Activated T-helper 1 cell treated with anti-CD3 and anti-CD28 coated beads, Interleukin-12 subunit alpha, Interleukin-12 subunit beta, Interleukin-2, Interleukin-4 antibody, amounts not matched to agents 30 ng/mL and 10 ng/mL and 1 ng/mL, durations not matched to agents 14 hours and 24 hours and 36 hours (primary cell): ENCODE measurements at regions of chr6 and their contacts with region 1.

Region 1: GRCh38 chr6:71012866-71013469 is 56.1 kb upstream of the B3GAT2 start:
- DNase-seq: no peak
- H3K4me3 Mint-ChIP-seq: no peak overlapping the region
- H3K27ac Mint-ChIP-seq: no peak overlapping the region
- H3K4me1 Mint-ChIP-seq: no peaks in the 10 kb centered on the region
- H3K27me3 Mint-ChIP-seq: peaks cover 5% of the 10 kb centered on the region

Region 2: GRCh38 chr6:70221025-70221714 is 791.8 kb before region 1 on chr6:
- intact Hi-C with region 1: loop called (anchors 2 kb)
- DNase-seq: no peak
- H3K4me3 Mint-ChIP-seq: no peak overlapping the region
- H3K27ac Mint-ChIP-seq: no peak overlapping the region
- H3K4me1 Mint-ChIP-seq: no peaks in the 10 kb centered on the region
- H3K27me3 Mint-ChIP-seq: peaks cover 4% of the 10 kb centered on the region

Region 3: GRCh38 chr6:70310063-70310694 is 702.8 kb before region 1 on chr6:
- intact Hi-C with region 1: loop called (anchors 1 kb)
- DNase-seq: no peak
- H3K4me3 Mint-ChIP-seq: no peak overlapping the region
- H3K27ac Mint-ChIP-seq: no peak overlapping the region
- H3K4me1 Mint-ChIP-seq: peaks cover 6% of the 10 kb centered on the region
- H3K27me3 Mint-ChIP-seq: peaks cover 4% of the 10 kb centered on the region

Region 4: DNA sequence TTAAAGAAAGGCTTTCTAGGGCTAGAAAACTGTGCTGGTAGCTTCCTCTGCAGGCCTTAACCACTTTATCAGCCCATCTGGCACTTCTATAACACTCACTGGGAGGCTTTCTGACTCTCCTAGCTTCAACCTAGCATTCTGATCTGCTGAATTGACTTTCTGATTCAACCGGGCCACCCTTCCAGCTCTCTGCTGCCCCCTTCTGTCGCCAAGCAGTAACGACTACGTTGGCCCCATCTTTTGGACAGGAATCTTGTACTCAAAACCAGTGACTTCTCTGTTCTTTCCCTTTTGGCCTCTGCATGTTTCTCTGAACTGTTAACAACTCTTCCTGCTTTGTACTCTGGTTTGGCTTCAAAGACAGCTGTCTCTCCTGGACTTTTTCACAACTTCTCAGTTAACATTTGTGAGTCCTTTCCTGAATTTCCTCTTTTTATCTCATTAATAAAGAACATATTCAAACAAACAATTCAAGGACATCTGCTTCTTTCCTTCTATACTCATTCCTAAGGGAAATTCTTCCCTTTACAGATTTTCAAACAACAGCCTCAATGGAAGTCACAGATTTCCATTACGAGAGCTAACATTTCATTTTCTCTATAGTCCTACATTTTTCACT is 643.5 kb before region 1 on chr6:
- intact Hi-C with region 1: loop called (anchors 2 kb)
- DNase-seq: peak; percentile 43
- H3K4me3 Mint-ChIP-seq: no peak overlapping the region
- H3K27ac Mint-ChIP-seq: no peak overlapping the region
- H3K4me1 Mint-ChIP-seq: no peaks in the 10 kb centered on the region
- H3K27me3 Mint-ChIP-seq: peaks cover 24% of the 10 kb centered on the region

Region 5: DNA sequence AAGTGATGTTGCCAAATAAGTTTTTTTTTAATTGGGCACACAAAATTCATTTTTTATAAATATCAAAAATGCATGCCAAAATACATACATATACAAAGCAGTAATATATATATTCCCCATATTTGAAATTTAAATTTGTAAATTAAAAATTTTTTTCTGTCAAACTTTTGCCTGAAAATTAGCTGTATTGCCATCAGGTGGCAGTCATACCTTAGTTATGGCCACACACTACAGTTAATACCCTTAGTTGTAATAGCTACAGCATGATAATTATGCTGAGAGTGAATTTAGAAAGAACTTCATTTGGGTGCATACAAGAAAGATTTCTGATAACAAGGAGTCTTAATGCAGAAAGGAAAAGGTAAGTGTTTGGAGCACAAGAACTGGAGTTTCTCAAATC is 492.4 kb before region 1 on chr6:
- intact Hi-C with region 1: loop called (anchors 10 kb)
- DNase-seq: no peak
- H3K4me3 Mint-ChIP-seq: no peak overlapping the region
- H3K27ac Mint-ChIP-seq: no peak overlapping the region
- H3K4me1 Mint-ChIP-seq: peaks cover 7% of the 10 kb centered on the region
- H3K27me3 Mint-ChIP-seq: no peaks in the 10 kb centered on the region

Region 6: DNA sequence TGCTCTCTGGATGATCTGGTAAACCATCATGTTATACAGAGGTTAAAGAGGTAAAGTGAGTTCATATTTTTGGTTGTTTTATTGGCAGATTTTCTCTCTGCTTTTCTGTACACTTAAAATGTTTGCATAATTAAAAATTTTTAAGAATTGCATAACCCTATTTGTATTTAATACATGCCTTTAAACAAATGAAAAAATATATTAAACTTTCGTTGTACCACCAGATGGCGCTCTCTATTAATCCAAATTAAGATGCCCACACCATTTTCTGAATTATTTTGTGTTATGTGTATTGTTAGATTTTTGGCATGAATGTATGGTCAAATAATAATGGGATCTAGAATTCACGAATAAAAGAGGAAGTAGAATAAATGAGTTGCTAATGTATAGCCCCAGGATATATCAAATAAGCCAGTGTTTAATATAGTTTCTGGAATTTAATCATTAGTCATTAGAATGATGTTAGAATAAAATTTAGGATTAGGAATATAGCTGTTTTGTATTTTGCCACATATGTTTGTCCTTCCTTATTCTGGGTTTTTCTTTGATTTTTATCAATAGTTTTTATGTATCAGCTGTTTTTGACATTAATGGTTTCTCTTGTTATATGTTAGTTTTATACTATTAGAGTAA is 306.4 kb before region 1 on chr6:
- intact Hi-C with region 1: loop called (anchors 1 kb)
- DNase-seq: no peak
- H3K4me3 Mint-ChIP-seq: no peak overlapping the region
- H3K27ac Mint-ChIP-seq: no peak overlapping the region
- H3K4me1 Mint-ChIP-seq: peaks cover 14% of the 10 kb centered on the region
- H3K27me3 Mint-ChIP-seq: no peaks in the 10 kb centered on the region